ENCODE measurements at regions of chr3 and their contacts with region 1.

Region 1: GRCh38 chr3:98602078-98602678 is 8.8 kb upstream of the CPOX start:
- DNase-seq: peak; percentile 64

Region 2: GRCh38 chr3:98994128-98994762 is 392.1 kb after region 1 on chr3:
- in situ Hi-C with region 1: loop called (anchors 25 kb)
- DNase-seq: peak; percentile 43